ENCODE measurements at regions of chr10 and their contacts with region 1.

Region 1: DNA sequence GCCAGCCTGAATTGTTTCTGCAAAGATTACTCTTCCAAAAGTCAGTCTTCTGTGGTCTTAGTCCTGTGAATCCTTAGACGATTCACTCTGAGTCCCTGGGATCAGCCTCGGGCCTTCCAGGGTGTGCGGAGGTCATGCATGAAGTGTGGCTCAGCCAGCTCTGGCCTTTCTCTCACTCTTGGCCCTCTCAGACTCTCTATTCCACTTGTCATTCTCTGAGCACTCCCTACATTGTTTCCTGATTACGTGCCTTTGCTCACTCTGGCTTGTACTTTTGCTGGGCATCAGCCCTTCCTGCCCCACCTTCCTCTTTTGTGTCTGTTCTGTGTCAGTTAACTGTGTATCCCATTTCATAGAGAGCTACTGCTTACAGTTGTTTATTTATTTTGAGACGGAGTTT is 36.0 kb downstream of the CCNY start:
- DNase-seq: peak; percentile 86

Region 2: GRCh38 chr10:35336084-35336831 is 36.1 kb before region 1 on chr10 and contains the start of gene CCNY:
- intact Hi-C with region 1: loop called (anchors 2 kb)
- DNase-seq: peak; percentile 92
- total RNA-seq, gene CCNY: 83.4 TPM